Activated CD4-positive, alpha-beta T cell treated with anti-CD3 and anti-CD28 coated beads for 36 hours (primary cell): ENCODE measurements at regions of chr12 and their contacts with region 1.

Region 1: DNA sequence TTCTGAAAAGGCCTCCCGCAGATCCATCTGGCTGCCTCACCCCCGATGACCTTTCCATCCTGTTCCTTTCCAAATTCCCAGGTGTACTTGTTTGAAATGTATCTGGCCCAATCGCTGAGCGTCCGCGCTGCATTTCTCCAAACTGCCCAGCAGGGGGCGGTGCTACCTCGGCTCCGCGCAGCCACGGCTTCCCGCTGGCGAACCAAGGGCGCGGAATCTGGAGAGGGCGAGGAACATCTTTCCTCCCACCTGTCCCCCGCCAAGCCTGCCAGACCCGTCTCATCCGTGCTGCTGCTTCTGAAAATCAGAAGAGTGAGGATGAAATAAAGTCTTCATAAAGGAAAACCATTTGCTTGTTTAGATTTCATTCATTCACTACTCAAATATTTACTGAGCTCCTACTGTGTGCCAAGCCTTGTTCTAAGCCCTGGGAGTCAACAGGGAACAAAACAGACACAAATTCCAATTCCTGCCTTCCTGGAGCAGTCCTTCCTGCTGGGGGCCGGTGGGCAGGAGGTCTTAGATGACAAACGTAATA is 16.8 kb upstream of the MYL2 start:
- DNase-seq: peak; percentile 75
- ATAC-seq: peak; percentile 39
- H3K4me3 Mint-ChIP-seq: no peak overlapping the region
- H3K27ac Mint-ChIP-seq: no peak overlapping the region
- H3K4me1 Mint-ChIP-seq: peaks cover 5% of the 10 kb centered on the region
- H3K27me3 Mint-ChIP-seq: peaks cover 10% of the 10 kb centered on the region

Region 2: DNA sequence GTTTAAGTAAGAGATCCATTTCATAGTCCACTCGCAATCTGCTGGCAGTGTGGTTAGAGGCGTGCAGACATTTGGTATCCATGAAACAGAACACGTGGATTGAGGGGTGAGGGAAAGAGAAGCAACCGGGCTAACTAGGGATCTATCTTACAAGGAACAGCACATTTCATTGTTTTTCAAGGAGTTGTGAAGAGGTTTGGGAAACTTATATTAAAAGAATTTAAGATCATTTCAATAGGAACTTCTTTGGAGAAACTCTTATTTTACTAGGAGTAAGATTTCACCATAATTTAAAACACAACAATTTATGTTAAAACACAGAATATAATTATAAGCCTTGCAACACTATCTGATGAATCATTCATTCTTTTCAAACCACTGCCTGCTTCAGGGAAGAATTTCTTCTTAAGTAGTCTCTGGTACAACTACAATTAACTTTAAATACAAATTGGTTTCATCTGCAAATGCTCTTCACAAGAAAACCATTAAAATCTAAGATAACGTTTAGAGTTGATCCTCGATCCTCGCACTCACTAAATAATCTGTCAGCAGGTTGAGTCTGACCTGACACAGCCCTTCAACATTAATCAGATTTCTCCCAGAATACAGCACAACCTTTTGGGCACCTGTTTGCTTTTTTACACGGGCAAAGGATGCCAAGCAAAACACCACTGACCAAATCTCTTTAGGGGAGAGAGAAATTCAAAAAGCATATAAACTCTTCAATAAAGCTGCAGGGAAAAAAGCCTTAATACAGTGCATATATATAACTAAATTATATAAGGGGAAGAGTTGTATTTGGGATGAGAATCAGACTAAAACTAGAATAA is 381.4 kb before region 1 on chr12:
- CTCF ChIA-PET with region 1: no interaction called
- POLR2A ChIA-PET with region 1: no interaction called
- intact Hi-C with region 1: no loop called
- DNase-seq: no peak
- ATAC-seq: no peak
- H3K4me3 Mint-ChIP-seq: no peak overlapping the region
- H3K27ac Mint-ChIP-seq: peak overlapping the region; percentile 29
- H3K4me1 Mint-ChIP-seq: peaks cover 56% of the 10 kb centered on the region
- H3K27me3 Mint-ChIP-seq: no peaks in the 10 kb centered on the region

Region 3: GRCh38 chr12:110998165-110998564 is 61.0 kb after region 1 on chr12:
- CTCF ChIA-PET with region 1: no interaction called
- POLR2A ChIA-PET with region 1: no interaction called
- intact Hi-C with region 1: no loop called
- DNase-seq: no peak
- ATAC-seq: no peak
- H3K4me3 Mint-ChIP-seq: no peak overlapping the region
- H3K27ac Mint-ChIP-seq: no peak overlapping the region
- H3K4me1 Mint-ChIP-seq: no peaks in the 10 kb centered on the region
- H3K27me3 Mint-ChIP-seq: peaks cover 3% of the 10 kb centered on the region

Region 4: GRCh38 chr12:111024205-111024801 is 87.1 kb after region 1 on chr12:
- CTCF ChIA-PET with region 1: no interaction called
- POLR2A ChIA-PET with region 1: no interaction called
- intact Hi-C with region 1: loop called in 1 of 2 experiments (anchors 2 kb)
- DNase-seq: peak; percentile 72
- ATAC-seq: peak; percentile 83
- H3K4me3 Mint-ChIP-seq: no peak overlapping the region
- H3K27ac Mint-ChIP-seq: no peak overlapping the region
- H3K4me1 Mint-ChIP-seq: no peaks in the 10 kb centered on the region
- H3K27me3 Mint-ChIP-seq: peaks cover 14% of the 10 kb centered on the region

Region 5: GRCh38 chr12:111174251-111174960 is 237.2 kb after region 1 on chr12:
- CTCF ChIA-PET with region 1: no interaction called
- POLR2A ChIA-PET with region 1: no interaction called
- intact Hi-C with region 1: loop called in 1 of 2 experiments (anchors 2 kb)
- DNase-seq: peak; percentile 9
- ATAC-seq: no peak
- H3K4me3 Mint-ChIP-seq: no peak overlapping the region
- H3K27ac Mint-ChIP-seq: no peak overlapping the region
- H3K4me1 Mint-ChIP-seq: no peaks in the 10 kb centered on the region
- H3K27me3 Mint-ChIP-seq: peaks cover 12% of the 10 kb centered on the region

Region 6: GRCh38 chr12:111298582-111299436 is 361.6 kb after region 1 on chr12:
- CTCF ChIA-PET with region 1: interaction called, 3 read pairs
- POLR2A ChIA-PET with region 1: no interaction called
- intact Hi-C with region 1: loop called (anchors 1 to 2 kb)
- DNase-seq: peak; percentile 76
- ATAC-seq: peak; percentile 60
- H3K4me3 Mint-ChIP-seq: no peak overlapping the region
- H3K27ac Mint-ChIP-seq: no peak overlapping the region
- H3K4me1 Mint-ChIP-seq: no peaks in the 10 kb centered on the region
- H3K27me3 Mint-ChIP-seq: no peaks in the 10 kb centered on the region